ENCODE measurements at regions of chr18 and their contacts with region 1.

Region 1: GRCh38 chr18:29962579-29962978 is 1080.0 kb downstream of the DSC3 start:
- DNase-seq: no peak
- H3K4me3 ChIP-seq: no peak overlapping the region
- H3K27ac ChIP-seq: no peak overlapping the region
- H3K4me1 ChIP-seq: no peaks in the 10 kb centered on the region
- H3K27me3 ChIP-seq: no peaks in the 10 kb centered on the region
- CTCF ChIP-seq: no peak
- EP300 ChIP-seq: no peak
- POLR2A ChIP-seq: no peak

Region 2: GRCh38 chr18:30056528-30056927 is 93.9 kb after region 1 on chr18:
- in situ Hi-C with region 1: loop called in 1 of 4 experiments (anchors 25 kb)
- intact Hi-C with region 1: no loop called
- DNase-seq: no peak
- H3K4me3 ChIP-seq: no peak overlapping the region
- H3K27ac ChIP-seq: no peak overlapping the region
- H3K4me1 ChIP-seq: no peaks in the 10 kb centered on the region
- H3K27me3 ChIP-seq: no peaks in the 10 kb centered on the region
- CTCF ChIP-seq: no peak
- EP300 ChIP-seq: no peak
- POLR2A ChIP-seq: no peak

Region 3: DNA sequence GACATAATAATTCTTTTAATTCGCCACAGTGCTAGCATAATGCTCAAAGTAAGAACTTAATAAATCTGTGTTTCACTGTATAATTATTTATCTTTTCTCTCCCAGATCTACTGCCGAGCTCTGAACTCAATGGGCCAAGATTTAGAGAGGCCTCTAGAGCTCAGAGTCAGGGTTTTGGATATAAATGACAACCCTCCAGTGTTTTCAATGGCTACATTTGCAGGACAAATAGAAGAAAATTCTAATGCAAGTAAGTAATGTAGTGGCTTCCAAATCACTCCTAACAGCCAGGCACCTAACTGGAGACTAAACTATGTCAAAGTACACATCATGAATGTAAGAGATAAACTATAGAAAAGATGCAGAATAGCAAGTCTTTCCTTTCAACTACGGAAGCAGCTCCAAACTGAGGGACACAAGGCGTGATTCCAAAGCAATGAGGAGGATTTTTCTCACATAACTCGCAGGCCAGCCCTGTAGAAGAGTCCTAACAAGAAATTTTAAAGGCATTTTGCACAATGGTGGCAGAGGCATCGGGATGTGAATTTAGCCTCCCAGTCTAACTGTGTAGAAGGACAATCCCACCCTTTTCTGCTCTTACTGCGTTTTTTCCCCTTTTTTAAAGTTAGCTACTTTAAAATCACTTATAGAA is 1367.3 kb after region 1 on chr18:
- in situ Hi-C with region 1: no loop called
- intact Hi-C with region 1: no loop called
- DNase-seq: no peak
- H3K4me3 ChIP-seq: no peak overlapping the region
- H3K27ac ChIP-seq: no peak overlapping the region
- H3K4me1 ChIP-seq: no peaks in the 10 kb centered on the region
- H3K27me3 ChIP-seq: no peaks in the 10 kb centered on the region
- CTCF ChIP-seq: no peak
- EP300 ChIP-seq: no peak
- POLR2A ChIP-seq: no peak

Measured in transverse colon (tissue), 4 donors.